Endothelial cell of umbilical vein (primary cell): ENCODE measurements at regions of chr2 and their contacts with region 1.

Region 1: DNA sequence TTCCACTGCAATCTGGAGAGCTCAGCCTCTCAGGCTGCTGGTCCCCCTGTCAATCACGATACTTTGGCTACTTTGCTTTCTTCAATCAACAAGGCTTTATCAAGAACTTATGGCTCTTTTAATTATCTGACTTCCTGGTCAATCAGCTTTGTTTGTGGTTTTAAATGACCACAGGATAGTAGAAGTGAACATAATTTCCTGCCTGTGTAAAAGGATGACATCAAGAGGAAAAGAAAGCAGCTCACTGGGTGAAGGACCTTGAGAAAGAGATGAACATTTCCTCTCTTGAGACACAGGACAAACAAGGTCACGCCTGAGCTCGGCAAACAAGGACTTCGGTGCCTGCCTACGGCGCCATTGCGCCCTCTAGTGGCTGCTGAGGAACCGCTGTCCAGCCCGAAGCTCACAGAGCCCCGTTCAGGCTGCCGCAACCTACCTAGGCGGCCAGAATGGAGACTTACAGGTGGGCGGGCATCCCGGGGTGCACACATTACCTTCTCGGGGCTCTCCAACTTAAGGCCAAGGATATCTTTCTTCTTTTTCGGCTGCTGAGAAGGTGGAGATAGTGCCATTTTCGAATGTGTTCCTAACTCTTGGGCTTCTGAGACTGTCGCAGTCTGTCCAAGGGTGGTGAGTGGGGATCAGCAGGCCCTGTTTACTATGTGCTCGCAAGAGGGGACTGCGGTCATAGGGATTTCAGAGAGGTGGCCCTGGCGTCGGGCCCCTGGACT is 54.0 kb downstream of the IL1RL2 start:
- DNase-seq: peak; percentile 94
- H3K4me3 ChIP-seq: no peak overlapping the region
- H3K27ac ChIP-seq: peak overlapping the region; percentile 36
- H3K4me1 ChIP-seq: peaks cover 12% of the 10 kb centered on the region
- H3K27me3 ChIP-seq: no peaks in the 10 kb centered on the region
- CTCF ChIP-seq: peak; percentile 97
- POLR2A ChIP-seq: no peak

Region 2: GRCh38 chr2:101998896-101999789 is 241.7 kb before region 1 on chr2:
- CTCF ChIA-PET with region 1: interaction called, 172 read pairs
- POLR2A ChIA-PET with region 1: no interaction called
- dilution Hi-C with region 1: no loop called
- intact Hi-C with region 1: no loop called
- DNase-seq: no peak
- H3K4me3 ChIP-seq: no peak overlapping the region
- H3K27ac ChIP-seq: no peak overlapping the region
- H3K4me1 ChIP-seq: no peaks in the 10 kb centered on the region
- H3K27me3 ChIP-seq: peaks cover 9 to 10% of the 10 kb centered on the region in 2 experiments
- CTCF ChIP-seq: no peak
- POLR2A ChIP-seq: no peak

Region 3: DNA sequence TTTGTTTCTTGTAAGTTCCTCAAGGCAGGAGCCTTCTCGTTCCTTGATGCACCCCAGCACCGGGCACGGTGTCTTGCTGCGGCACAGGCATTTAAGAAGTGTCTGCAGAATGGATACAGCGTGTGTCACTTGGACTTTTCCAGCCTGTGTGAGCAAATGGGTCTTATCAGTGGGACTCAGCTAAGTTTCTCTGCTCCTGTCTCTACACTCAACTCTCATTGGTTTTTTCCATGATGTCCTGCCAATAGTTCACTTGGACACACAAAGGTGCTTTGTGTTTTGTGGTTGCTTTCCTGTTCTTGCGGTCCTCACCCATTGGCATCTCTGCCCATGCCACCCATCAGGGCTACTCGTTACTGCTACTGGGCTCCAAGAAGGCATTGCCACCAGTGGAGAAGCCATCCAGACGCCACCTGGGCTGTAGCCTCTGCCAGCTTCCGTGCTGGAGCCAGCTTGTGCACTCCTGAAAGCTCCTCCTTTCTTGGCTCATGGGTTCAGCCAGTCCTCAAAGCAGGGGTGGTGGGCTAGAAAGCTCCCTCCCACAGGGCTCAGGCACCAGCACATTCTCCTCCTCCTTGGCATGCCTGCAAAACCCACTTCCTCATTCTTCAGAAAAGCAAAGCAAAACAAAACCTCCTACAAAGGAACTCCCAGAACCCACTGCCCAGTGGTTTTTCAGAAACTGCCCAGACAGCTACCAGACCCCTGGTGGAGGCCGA is 207.6 kb before region 1 on chr2:
- CTCF ChIA-PET with region 1: interaction called, 30 read pairs
- POLR2A ChIA-PET with region 1: no interaction called
- dilution Hi-C with region 1: no loop called
- intact Hi-C with region 1: no loop called
- DNase-seq: peak; percentile 47
- H3K4me3 ChIP-seq: no peak overlapping the region
- H3K27ac ChIP-seq: no peak overlapping the region
- H3K4me1 ChIP-seq: no peaks in the 10 kb centered on the region
- H3K27me3 ChIP-seq: no peaks in the 10 kb centered on the region
- CTCF ChIP-seq: no peak
- POLR2A ChIP-seq: no peak

Region 4: GRCh38 chr2:102116630-102117471 is 124.0 kb before region 1 on chr2:
- CTCF ChIA-PET with region 1: interaction called, 10 read pairs
- POLR2A ChIA-PET with region 1: no interaction called
- dilution Hi-C with region 1: no loop called
- intact Hi-C with region 1: no loop called
- DNase-seq: no peak
- H3K4me3 ChIP-seq: no peak overlapping the region
- H3K27ac ChIP-seq: no peak overlapping the region
- H3K4me1 ChIP-seq: peaks cover 4% of the 10 kb centered on the region
- H3K27me3 ChIP-seq: no peaks in the 10 kb centered on the region
- CTCF ChIP-seq: no peak
- POLR2A ChIP-seq: no peak

Region 5: GRCh38 chr2:102251042-102251848 is 10.4 kb after region 1 on chr2:
- CTCF ChIA-PET with region 1: interaction called, 16 read pairs
- POLR2A ChIA-PET with region 1: no interaction called
- dilution Hi-C with region 1: no loop called
- intact Hi-C with region 1: no loop called
- DNase-seq: peak; percentile 23
- H3K4me3 ChIP-seq: peak overlapping the region in 2 of 3 experiments; percentile 36 to 42
- H3K27ac ChIP-seq: no peak overlapping the region
- H3K4me1 ChIP-seq: peaks cover 8% of the 10 kb centered on the region
- H3K27me3 ChIP-seq: no peaks in the 10 kb centered on the region
- CTCF ChIP-seq: peak in 1 of 2 donors; percentile 34
- POLR2A ChIP-seq: no peak

Region 6: GRCh38 chr2:102336502-102336945 is 95.7 kb after region 1 on chr2:
- CTCF ChIA-PET with region 1: interaction called, 17 read pairs
- POLR2A ChIA-PET with region 1: no interaction called
- dilution Hi-C with region 1: no loop called
- intact Hi-C with region 1: no loop called
- DNase-seq: peak; percentile 68
- H3K4me3 ChIP-seq: peak overlapping the region in 2 of 3 experiments; percentile 74 to 95
- H3K27ac ChIP-seq: peak overlapping the region; percentile 99
- H3K4me1 ChIP-seq: peaks cover 56% of the 10 kb centered on the region
- H3K27me3 ChIP-seq: no peaks in the 10 kb centered on the region
- CTCF ChIP-seq: no peak
- POLR2A ChIP-seq: no peak

Region 7: DNA sequence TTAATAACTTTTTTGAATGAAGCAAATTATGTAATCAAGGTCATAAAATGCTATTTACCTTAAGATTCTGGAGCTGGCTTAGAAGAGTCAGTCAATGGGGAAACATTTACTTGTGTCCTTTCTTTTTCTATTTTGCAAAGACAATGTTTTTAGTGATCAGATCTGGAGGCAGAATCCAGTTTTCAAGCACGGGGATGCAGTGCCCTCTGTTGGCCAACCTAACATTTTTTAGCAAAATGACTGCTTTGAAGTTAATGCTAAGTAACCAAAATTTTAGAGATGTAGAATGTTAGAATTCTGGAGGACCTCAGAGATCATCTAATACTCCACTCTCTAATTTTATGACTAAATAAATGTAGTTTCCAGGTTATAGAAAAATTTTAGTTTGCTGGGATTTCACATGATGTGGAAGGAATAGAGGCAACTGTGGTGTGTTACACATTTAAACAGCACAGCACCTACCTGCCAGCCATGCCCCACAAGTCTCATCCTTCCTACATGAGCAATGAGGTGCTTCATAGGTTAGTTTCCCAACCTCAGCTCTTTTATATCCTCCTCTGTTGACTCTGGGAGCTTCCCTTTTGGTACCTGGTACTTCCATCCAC is 208.7 kb after region 1 on chr2:
- CTCF ChIA-PET with region 1: interaction called, 52 read pairs
- POLR2A ChIA-PET with region 1: no interaction called
- dilution Hi-C with region 1: no loop called
- intact Hi-C with region 1: no loop called
- DNase-seq: peak; percentile 67
- H3K4me3 ChIP-seq: no peak overlapping the region
- H3K27ac ChIP-seq: no peak overlapping the region
- H3K4me1 ChIP-seq: no peaks in the 10 kb centered on the region
- H3K27me3 ChIP-seq: peaks cover 0 to 5% of the 10 kb centered on the region in 2 experiments
- CTCF ChIP-seq: peak; percentile 53 to 58
- POLR2A ChIP-seq: no peak